HEK293T (cell line): ENCODE measurements at regions of chr19 and their contacts with region 1.

Region 1: GRCh38 chr19:17305517-17306284 is at the start of gene MRPL34:
- DNase-seq: peak; percentile 79

Region 2: GRCh38 chr19:17292286-17293097 is 13.2 kb before region 1 on chr19:
- CTCF ChIA-PET with region 1: interaction called, 11 read pairs
- POLR2A ChIA-PET with region 1: interaction called, 14 read pairs
- DNase-seq: peak; percentile 94

Region 3: GRCh38 chr19:17327651-17328516 is 22.2 kb after region 1 on chr19:
- CTCF ChIA-PET with region 1: interaction called, 6 read pairs
- POLR2A ChIA-PET with region 1: interaction called, 107 read pairs
- DNase-seq: peak; percentile 87

Region 4: DNA sequence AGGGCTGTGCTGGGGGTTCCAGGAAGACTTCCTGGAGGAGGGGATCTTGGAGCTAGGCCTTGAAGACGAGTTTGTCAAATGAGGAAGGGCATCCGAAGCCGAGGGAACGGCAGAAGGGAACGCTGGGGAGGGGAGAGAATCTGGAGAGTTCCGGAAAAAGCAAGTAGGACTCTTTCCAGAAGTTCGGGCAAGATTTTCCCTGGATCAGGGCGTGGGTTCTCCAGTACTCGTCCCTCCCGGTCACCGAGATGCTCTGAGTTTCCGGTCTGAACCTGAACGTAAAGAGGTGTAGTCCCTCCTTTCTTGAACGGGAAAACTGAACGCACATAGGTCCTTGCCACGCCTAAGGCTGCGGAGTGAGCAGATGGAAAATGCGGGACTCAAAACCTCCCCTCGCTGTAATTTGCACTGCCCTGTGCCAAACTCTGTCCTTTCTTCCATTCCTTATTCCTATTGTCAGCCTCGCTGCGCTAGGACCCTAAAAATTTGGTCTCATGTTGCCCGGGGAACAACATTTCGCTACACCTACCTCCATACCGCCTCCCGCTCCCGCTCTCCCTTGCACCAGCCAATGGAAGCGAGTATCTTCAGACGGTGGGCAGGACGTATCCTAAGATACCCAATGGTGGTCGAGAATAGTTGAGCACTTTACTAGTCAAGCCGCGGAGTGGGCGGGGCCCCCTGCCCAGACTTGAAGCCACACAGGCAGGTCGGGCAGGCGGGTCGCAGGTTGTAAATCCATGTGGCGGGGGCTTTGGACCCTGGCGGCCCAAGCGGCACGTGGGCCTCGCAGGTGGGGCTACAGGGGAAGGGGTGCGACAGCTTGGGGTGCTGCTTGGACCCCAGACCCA is 31.4 kb after region 1 on chr19 and contains the start of gene GTPBP3:
- CTCF ChIA-PET with region 1: interaction called, 6 read pairs
- POLR2A ChIA-PET with region 1: interaction called, 107 read pairs
- DNase-seq: peak; percentile 98

Region 5: DNA sequence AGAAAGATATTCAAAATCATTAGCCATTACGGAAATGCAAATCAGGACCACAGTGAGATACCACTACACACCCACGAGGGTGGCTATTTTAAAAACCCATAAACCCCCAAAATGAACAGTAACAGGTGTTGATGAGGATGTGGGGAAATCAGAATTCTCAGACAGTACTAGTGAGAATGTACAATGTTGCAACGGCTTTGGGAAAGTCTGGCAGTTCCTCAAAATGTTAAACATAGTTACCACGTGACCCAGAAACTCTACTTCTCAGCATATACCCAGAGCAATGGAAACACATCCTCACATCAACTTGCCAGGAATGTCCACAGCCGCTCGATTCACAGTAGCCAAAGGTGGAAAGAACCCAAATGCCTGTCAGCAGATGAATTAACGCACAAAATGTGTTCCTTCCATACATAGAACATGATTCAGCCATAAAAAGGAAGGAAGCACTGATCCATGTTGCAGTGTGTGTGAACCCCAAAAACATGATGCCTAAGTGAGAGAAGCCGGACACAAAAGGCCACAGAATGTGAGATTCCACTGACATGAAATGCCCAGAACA is 64.4 kb after region 1 on chr19:
- CTCF ChIA-PET with region 1: interaction called, 11 read pairs
- POLR2A ChIA-PET with region 1: no interaction called
- DNase-seq: no peak